IMR-90 (cell line): ENCODE measurements at regions of chr2 and their contacts with region 1.

Region 1: GRCh38 chr2:4122726-4123125 is 419.4 kb downstream of the DCDC2C start:
- DNase-seq: no peak
- ATAC-seq: no peak
- H3K4me3 ChIP-seq: no peak overlapping the region
- H3K27ac ChIP-seq: no peak overlapping the region
- H3K4me1 ChIP-seq: no peaks in the 10 kb centered on the region
- H3K27me3 ChIP-seq: no peaks in the 10 kb centered on the region
- CTCF ChIP-seq: no peak
- POLR2A ChIP-seq: no peak
- RAD21 ChIP-seq: no peak

Region 2: GRCh38 chr2:4012197-4012596 is 110.5 kb before region 1 on chr2:
- CTCF ChIA-PET with region 1: no interaction called
- POLR2A ChIA-PET with region 1: no interaction called
- dilution Hi-C with region 1: no loop called
- in situ Hi-C with region 1: no loop called
- intact Hi-C with region 1: no loop called
- DNase-seq: no peak
- ATAC-seq: no peak
- H3K4me3 ChIP-seq: no peak overlapping the region
- H3K27ac ChIP-seq: no peak overlapping the region
- H3K4me1 ChIP-seq: no peaks in the 10 kb centered on the region
- H3K27me3 ChIP-seq: no peaks in the 10 kb centered on the region
- CTCF ChIP-seq: no peak
- POLR2A ChIP-seq: no peak
- RAD21 ChIP-seq: no peak

Region 3: DNA sequence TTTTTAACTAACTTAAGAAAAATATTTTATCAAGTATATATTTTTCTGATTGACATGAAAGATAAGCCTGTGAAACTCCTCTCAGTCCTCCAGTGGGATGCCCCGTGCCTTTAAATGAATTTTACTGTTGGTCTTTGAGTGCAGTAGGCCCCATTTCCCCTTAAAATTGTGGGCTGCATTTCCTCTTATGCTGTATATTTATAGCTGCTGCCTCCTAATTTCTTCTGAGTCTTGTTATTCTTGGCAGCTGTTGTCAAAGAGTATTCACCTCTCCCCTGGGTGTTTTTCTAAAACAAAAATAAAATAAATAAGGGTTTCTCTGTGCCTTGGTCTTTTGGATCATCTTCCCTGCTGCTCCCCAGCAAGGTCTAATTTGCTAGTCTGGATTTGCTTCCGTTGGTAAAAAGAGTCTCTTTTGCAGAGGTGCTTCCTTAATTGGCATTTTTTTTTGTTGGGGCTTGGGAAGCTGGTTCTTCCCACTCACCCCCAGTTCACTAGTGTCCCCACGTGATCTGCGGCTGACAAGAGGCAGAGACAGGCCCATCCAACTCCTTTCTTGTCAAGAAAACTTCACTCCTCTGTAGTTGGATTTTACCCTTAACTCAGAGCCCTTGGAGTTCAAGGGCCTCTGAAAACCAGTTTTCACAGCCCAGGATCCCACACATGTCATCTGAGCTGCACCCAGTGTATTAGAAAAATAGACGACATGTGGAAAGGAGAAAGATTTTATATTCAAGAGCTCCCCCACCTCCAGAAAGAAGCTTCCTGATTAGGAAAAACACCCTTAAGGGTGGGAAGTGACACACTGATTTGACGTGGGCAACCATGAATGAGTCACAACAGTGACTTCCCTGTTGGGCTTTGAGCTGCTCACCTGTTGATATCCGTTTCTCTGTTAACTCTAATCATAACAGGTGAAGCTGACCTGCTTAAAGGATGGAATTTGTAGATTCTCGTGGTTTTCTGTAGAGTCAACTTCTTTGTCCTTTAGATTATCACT is 12.1 kb after region 1 on chr2:
- CTCF ChIA-PET with region 1: no interaction called
- POLR2A ChIA-PET with region 1: no interaction called
- dilution Hi-C with region 1: no loop called
- in situ Hi-C with region 1: no loop called
- intact Hi-C with region 1: loop called (anchors 1 kb)
- DNase-seq: no peak
- ATAC-seq: no peak
- H3K4me3 ChIP-seq: no peak overlapping the region
- H3K27ac ChIP-seq: no peak overlapping the region
- H3K4me1 ChIP-seq: no peaks in the 10 kb centered on the region
- H3K27me3 ChIP-seq: no peaks in the 10 kb centered on the region
- CTCF ChIP-seq: no peak
- POLR2A ChIP-seq: no peak
- RAD21 ChIP-seq: no peak